Activated B cell treated with CpG ODN at 0.5 μM for 24 hours (primary cell): ENCODE measurements at regions of chr22 and their contacts with region 1.

Region 1: GRCh38 chr22:50244420-50245213 is at the start of gene TUBGCP6:
- DNase-seq: peak; percentile 96
- ATAC-seq: peak; percentile 76
- H3K4me3 Mint-ChIP-seq: peak within 1 kb of the TSS; percentile 100
- H3K27ac Mint-ChIP-seq: peak within 1 kb of the TSS; percentile 100
- H3K4me1 Mint-ChIP-seq: peaks cover 52% of the 10 kb centered on the region
- H3K27me3 Mint-ChIP-seq: no peaks in the 10 kb centered on the region
- CTCF ChIP-seq: no peak
- total RNA-seq, gene TUBGCP6: 87.5 and 103 TPM in 2 replicates

Region 2: GRCh38 chr22:50260801-50261614 is 16.4 kb after region 1 on chr22:
- CTCF ChIA-PET with region 1: no interaction called
- POLR2A ChIA-PET with region 1: no interaction called
- intact Hi-C with region 1: no loop called
- DNase-seq: no peak
- ATAC-seq: peak; percentile 35
- H3K4me3 Mint-ChIP-seq: peak overlapping the region; percentile 15
- H3K27ac Mint-ChIP-seq: no peak overlapping the region
- H3K4me1 Mint-ChIP-seq: peaks cover 18% of the 10 kb centered on the region
- H3K27me3 Mint-ChIP-seq: peaks cover 13% of the 10 kb centered on the region
- CTCF ChIP-seq: no peak

Region 3: DNA sequence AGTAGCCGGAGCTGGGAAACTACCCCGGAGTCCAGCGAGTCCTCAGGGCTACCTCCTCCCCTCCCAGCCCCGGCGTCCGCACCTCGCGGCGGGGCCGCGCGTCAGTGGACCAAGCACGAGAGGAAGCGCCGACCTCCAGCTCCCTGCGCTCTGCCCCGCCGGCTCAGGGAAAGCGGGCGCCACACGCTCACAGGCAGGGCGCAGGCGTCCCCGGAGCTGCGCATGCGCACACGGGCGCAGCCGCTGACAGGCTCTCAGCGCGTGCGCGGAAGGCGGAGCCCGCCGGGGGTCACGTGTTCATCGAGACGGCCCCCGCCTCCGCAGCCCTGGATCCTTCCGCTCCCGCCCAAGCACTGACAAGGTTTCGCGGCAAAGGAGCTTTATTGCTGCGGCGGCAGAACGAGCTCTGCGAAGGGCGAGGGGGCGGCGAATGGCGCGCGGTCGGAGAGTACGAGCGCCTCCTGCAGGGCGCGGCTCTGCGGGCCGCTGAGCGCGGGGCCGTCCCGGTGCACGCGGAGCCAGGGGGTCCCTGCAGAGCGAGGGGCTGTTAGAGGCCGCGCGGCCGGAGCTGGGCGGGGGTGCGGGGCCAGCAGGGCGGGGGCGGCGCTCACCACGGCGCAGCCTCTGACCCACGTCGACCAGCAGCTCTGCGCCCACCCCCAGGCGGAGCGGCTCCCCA is 280.9 kb after region 1 on chr22 and contains the start of gene SCO2:
- CTCF ChIA-PET with region 1: interaction called, 13 read pairs
- POLR2A ChIA-PET with region 1: interaction called, 15 read pairs
- intact Hi-C with region 1: loop called (anchors 1 kb)
- DNase-seq: peak; percentile 97
- ATAC-seq: peak; percentile 52
- H3K4me3 Mint-ChIP-seq: peak within 1 kb of the TSS; percentile 84
- H3K27ac Mint-ChIP-seq: peak within 1 kb of the TSS; percentile 90
- H3K4me1 Mint-ChIP-seq: peaks cover 33% of the 10 kb centered on the region
- H3K27me3 Mint-ChIP-seq: no peaks in the 10 kb centered on the region
- CTCF ChIP-seq: no peak
- total RNA-seq, gene SCO2: 7.1 and 11.6 TPM in 2 replicates